Mammary epithelial cell (primary cell): ENCODE measurements at regions of chr4 and their contacts with region 1.

Region 1: DNA sequence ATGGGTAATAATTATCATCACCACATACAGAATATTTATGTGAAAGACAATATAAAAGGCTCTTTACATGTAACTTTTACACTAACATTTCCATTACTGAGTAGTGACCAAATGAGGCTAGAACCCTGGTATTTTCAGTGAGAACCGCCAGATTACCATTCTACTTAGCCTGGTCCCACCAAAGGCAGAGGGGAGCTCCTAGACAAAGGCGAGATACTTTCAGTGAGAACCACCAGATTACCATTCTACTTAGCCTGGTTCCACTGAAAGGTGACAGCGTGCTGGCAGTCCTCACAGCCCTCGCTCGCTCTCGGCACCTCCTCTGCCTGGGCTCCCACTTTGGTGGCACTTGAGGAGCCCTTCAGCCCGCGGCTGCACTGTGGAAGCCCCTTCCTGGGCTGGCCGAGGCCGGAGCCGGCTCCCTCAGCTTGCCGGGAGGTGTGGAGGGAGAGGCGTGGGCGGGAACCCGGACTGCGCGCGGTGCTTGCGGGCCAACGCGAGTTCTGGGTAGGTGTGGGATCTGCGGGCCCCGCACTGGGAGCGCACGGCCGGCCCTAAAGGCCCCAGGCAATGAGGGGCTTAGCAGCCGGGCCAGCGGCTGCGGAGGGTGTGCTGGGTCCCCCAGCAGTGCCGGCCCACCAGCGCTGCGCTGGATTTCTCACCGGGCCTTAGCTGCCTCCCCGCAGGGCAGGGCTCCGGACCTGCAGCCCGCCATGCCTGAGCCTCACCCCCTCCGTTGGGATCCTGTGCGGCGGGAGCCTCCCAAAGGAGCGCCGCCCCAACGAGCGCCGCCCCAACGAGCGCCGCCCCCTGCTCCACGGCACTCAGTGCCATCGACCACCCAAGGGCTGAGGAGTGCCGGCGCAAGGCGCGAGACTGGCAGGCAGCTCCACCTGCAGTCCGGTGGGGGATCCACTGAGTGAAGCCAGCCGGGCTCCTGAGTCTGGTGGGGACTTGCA is 1276.1 kb downstream of the PCDH7 start:
- DNase-seq: no peak
- H3K4me3 ChIP-seq: no peak overlapping the region
- H3K27ac ChIP-seq: no peak overlapping the region
- H3K4me1 ChIP-seq: no peaks in the 10 kb centered on the region
- H3K27me3 ChIP-seq: no peaks in the 10 kb centered on the region
- CTCF ChIP-seq: no peak

Region 2: GRCh38 chr4:31783311-31783710 is 212.9 kb before region 1 on chr4:
- CTCF ChIA-PET with region 1: no interaction called
- dilution Hi-C with region 1: no loop called
- in situ Hi-C with region 1: no loop called
- intact Hi-C with region 1: no loop called
- DNase-seq: no peak
- H3K4me3 ChIP-seq: no peak overlapping the region
- H3K27ac ChIP-seq: no peak overlapping the region
- H3K4me1 ChIP-seq: no peaks in the 10 kb centered on the region
- H3K27me3 ChIP-seq: no peaks in the 10 kb centered on the region
- CTCF ChIP-seq: no peak

Region 3: GRCh38 chr4:32748498-32748897 is 752.3 kb after region 1 on chr4:
- CTCF ChIA-PET with region 1: no interaction called
- dilution Hi-C with region 1: no loop called
- in situ Hi-C with region 1: loop called in 1 of 2 experiments (anchors 25 kb)
- intact Hi-C with region 1: no loop called
- DNase-seq: no peak
- H3K4me3 ChIP-seq: no peak overlapping the region
- H3K27ac ChIP-seq: no peak overlapping the region
- H3K4me1 ChIP-seq: no peaks in the 10 kb centered on the region
- H3K27me3 ChIP-seq: no peaks in the 10 kb centered on the region
- CTCF ChIP-seq: no peak